GM18951 (cell line): ENCODE measurements at regions of chr22 and their contacts with region 1.

Region 1: DNA sequence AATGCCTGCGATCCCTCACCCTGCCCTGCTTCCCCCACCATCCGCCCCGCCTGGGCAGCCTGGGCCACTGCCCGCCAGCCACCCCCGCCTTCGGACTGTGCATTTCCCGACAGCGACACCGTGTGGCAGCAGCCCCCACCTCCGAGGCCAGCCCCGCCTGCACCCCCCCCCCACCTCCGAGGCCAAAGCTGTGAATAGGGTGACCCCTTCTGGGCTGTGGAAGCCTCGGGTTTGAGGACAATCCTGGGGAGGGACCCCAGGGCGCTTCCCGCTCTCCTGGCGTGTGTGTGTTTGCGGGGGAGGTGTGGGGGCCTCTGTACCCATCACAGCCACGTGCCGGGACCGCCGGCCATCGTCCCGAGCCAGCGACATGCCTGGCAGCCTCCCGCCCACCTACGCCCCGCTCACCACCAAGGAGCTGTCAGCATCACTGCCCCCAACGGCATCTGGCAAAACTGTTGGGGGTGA is 33.8 kb upstream of the PPARA start:
- POLR2A ChIP-seq: no peak

Region 2: DNA sequence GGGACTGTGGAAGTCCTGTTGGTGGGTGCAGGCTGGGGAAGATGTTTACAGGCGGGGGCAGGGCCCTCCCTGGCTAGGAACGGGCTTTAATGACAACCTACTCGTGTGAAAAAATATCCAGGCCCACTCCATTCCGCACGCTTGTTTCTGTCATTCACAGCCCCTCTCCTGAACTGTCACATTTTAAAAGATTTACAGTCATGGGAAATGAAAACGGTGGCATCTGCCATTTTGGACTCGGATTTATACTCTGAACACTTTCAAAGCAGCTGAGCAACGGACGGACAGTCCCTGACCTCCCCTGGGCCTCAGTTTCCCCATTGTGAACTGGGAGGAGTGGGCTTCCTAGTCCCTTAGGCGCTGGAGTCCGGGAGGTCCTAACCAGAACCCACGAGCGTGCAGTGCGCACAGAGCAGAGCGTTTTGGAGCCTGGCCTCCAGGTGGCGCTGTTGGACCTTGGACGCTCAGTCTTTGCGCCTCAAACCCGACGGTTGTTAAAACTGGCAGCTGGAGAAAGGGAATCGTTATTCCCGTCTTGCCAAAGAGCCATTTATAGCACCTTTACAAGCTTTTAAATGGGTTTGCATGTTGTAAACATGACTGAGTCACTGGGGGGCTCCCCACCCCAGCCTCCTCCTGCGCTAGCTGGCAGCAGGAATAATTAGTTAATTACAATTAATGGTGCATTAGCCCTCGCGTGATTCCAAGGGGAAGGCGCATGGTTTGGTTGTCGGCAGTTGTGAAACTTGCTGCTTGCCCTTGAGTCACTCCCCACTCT is 538.6 kb before region 1 on chr22:
- in situ Hi-C with region 1: loop called (anchors 25 kb)
- POLR2A ChIP-seq: no peak

Region 3: GRCh38 chr22:46013460-46014416 is 102.8 kb before region 1 on chr22:
- in situ Hi-C with region 1: loop called (anchors 5 kb)
- POLR2A ChIP-seq: peak; percentile 52